HEK293 (cell line): ENCODE measurements at regions of chr2 and their contacts with region 1.

Region 1: DNA sequence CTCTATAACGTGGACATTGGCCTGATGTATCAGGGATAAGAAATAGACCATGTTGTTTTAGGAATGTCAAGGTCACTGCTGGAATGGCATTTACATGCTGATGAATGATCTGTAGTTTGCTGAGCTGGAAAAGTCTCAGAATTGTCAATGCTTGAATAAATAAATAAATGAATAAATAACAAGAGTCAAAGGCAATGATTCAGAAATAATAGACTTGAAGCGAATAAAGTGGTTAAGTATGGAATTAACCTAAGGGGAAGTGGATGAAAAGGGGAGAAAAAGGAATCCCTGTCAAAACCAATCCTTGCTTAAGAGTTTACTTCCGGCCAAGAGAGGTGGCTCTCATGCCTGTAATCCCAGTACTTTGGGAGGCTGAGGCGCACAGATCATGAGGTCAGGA is 1620.0 kb downstream of the SUCLG1 start:
- H3K4me3 ChIP-seq: no peak overlapping the region
- H3K27ac ChIP-seq: no peak overlapping the region
- H3K4me1 ChIP-seq: no peaks in the 10 kb centered on the region
- CTCF ChIP-seq: no peak

Region 2: DNA sequence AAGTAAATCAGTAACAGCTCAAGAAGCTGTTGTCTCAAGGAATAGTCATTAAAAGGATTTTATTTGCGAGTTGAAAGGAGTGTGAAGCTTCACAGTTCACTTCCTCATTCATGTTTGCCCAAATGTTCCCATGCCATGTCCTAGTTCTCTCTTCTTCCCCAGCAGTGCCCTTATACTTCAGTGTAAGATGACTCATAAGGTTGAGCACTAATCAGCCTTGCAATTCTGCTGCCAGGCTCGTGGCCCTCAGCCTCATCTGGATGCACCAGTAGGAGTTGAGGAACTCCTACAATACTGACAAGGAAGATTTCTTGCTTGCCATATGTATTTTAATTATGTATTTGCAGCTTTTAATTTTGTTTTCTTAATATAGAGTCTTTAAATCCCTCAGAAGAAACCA is 360.4 kb before region 1 on chr2:
- CTCF ChIA-PET with region 1: interaction called, 11 read pairs
- POLR2A ChIA-PET with region 1: no interaction called
- H3K4me3 ChIP-seq: no peak overlapping the region
- H3K27ac ChIP-seq: no peak overlapping the region
- H3K4me1 ChIP-seq: no peaks in the 10 kb centered on the region
- CTCF ChIP-seq: no peak